Mammary epithelial cell (primary cell): ENCODE measurements at regions of chr22 and their contacts with region 1.

Region 1: DNA sequence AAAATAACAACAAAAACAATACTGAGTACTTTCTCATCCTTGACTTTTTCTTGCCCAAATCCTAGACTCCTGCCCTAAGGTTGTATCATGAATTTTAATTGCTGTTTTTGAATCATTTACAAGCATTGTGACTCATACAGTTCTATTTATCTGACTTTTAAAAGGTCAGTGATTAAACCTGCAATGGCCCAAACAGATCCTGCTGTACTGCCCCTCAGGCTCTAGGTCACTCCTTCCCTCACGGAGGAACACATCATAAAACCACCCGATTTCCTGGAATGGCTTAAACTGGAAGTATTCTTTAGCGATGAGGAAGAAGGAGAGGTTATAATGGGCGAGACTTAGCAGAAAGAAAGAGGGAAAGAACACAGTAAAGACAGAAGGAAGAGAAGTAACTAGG is 12.3 kb downstream of the ARFGAP3 start:
- DNase-seq: peak; percentile 80
- H3K4me3 ChIP-seq: no peak overlapping the region
- H3K27ac ChIP-seq: no peak overlapping the region
- H3K4me1 ChIP-seq: peaks cover 8% of the 10 kb centered on the region
- H3K27me3 ChIP-seq: no peaks in the 10 kb centered on the region
- CTCF ChIP-seq: no peak

Region 2: DNA sequence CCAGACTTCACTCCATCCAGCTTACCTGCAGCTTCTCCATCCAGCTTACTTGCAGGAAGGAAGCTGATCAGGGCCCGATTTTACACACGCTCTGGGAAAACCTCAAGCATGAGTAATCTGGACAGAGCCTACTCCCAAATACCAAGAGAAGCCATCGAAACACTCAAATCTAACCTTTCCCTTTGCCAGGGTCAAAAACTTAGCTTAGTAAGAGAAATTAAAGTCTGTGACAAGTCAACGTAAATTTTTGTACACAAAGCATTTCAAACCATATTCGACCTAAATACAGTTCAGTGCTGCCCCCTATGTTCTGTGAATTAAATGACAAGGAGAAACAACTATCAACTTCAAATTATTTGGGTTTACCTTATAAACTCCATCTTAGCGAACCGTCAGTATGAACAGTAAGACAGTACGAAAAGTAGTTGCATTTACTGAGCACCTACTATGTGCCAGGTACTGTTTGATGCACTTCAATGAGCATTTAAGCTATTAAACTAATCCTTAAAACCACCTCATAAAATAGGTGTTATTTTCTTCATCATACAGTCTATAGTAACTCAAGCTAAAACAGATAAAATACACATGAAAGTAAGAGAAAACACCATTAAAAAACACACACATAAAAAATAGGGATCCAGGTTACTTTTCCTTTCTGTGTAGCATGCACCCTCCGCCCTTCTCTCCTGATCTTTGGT is 24.5 kb before region 1 on chr22:
- CTCF ChIA-PET with region 1: no interaction called
- dilution Hi-C with region 1: no loop called
- in situ Hi-C with region 1: no loop called
- intact Hi-C with region 1: no loop called
- DNase-seq: peak; percentile 82
- H3K4me3 ChIP-seq: no peak overlapping the region
- H3K27ac ChIP-seq: no peak overlapping the region
- H3K4me1 ChIP-seq: peaks cover 10% of the 10 kb centered on the region
- H3K27me3 ChIP-seq: no peaks in the 10 kb centered on the region
- CTCF ChIP-seq: peak; percentile 61 to 76

Region 3: GRCh38 chr22:42978453-42979103 is 133.8 kb after region 1 on chr22:
- CTCF ChIA-PET with region 1: no interaction called
- dilution Hi-C with region 1: no loop called
- in situ Hi-C with region 1: no loop called
- intact Hi-C with region 1: loop called (anchors 5 kb)
- DNase-seq: peak; percentile 87
- H3K4me3 ChIP-seq: no peak overlapping the region
- H3K27ac ChIP-seq: peak overlapping the region; percentile 60
- H3K4me1 ChIP-seq: peaks cover 33% of the 10 kb centered on the region
- H3K27me3 ChIP-seq: no peaks in the 10 kb centered on the region
- CTCF ChIP-seq: no peak